Activated CD8-positive, alpha-beta T cell treated with anti-CD3 and anti-CD28 coated beads, Interleukin-2, amount 10 ng/mL, durations not matched to agents 7 days and 5 days (primary cell): ENCODE measurements at regions of chr1 and their contacts with region 1.

Region 1: GRCh38 chr1:110766025-110766647 is 91.4 kb upstream of the KCNA3 start:
- DNase-seq: peak; percentile 80
- ATAC-seq: peak; percentile 82
- H3K4me3 Mint-ChIP-seq: peak overlapping the region; percentile 29
- H3K27ac Mint-ChIP-seq: no peak overlapping the region
- H3K4me1 Mint-ChIP-seq: peaks cover 9% of the 10 kb centered on the region
- H3K27me3 Mint-ChIP-seq: peaks cover 36% of the 10 kb centered on the region

Region 2: GRCh38 chr1:110554871-110555801 is 211.0 kb before region 1 on chr1:
- CTCF ChIA-PET with region 1: interaction called, 23 read pairs
- POLR2A ChIA-PET with region 1: no interaction called
- DNase-seq: peak; percentile 62
- ATAC-seq: peak; percentile 84
- H3K4me3 Mint-ChIP-seq: no peak overlapping the region
- H3K27ac Mint-ChIP-seq: no peak overlapping the region
- H3K4me1 Mint-ChIP-seq: peaks cover 2% of the 10 kb centered on the region
- H3K27me3 Mint-ChIP-seq: peaks cover 51% of the 10 kb centered on the region

Region 3: GRCh38 chr1:110639724-110640386 is 126.3 kb before region 1 on chr1:
- CTCF ChIA-PET with region 1: interaction called, 23 read pairs
- POLR2A ChIA-PET with region 1: interaction called, 3 read pairs
- DNase-seq: no peak
- ATAC-seq: no peak
- H3K4me3 Mint-ChIP-seq: no peak overlapping the region
- H3K27ac Mint-ChIP-seq: no peak overlapping the region
- H3K4me1 Mint-ChIP-seq: peaks cover 66% of the 10 kb centered on the region
- H3K27me3 Mint-ChIP-seq: no peaks in the 10 kb centered on the region

Region 4: GRCh38 chr1:110674337-110675059 is 91.6 kb before region 1 on chr1 and contains the start of gene KCNA3:
- CTCF ChIA-PET with region 1: interaction called, 56 read pairs
- POLR2A ChIA-PET with region 1: interaction called, 13 read pairs
- DNase-seq: peak; percentile 77
- ATAC-seq: peak; percentile 43
- H3K4me3 Mint-ChIP-seq: peak within 1 kb of the TSS; percentile 95
- H3K27ac Mint-ChIP-seq: peak within 1 kb of the TSS; percentile 91
- H3K4me1 Mint-ChIP-seq: peaks cover 33% of the 10 kb centered on the region
- H3K27me3 Mint-ChIP-seq: no peaks in the 10 kb centered on the region
- total RNA-seq, gene KCNA3: 49.0 to 49.3 TPM

Region 5: GRCh38 chr1:110780600-110781484 is 14.7 kb after region 1 on chr1:
- CTCF ChIA-PET with region 1: interaction called, 113 read pairs
- POLR2A ChIA-PET with region 1: interaction called, 3 read pairs
- DNase-seq: peak; percentile 86
- ATAC-seq: peak; percentile 71
- H3K4me3 Mint-ChIP-seq: no peak overlapping the region
- H3K27ac Mint-ChIP-seq: no peak overlapping the region
- H3K4me1 Mint-ChIP-seq: peaks cover 42% of the 10 kb centered on the region
- H3K27me3 Mint-ChIP-seq: peaks cover 7% of the 10 kb centered on the region

Region 6: GRCh38 chr1:111030590-111030989 is 264.5 kb after region 1 on chr1:
- CTCF ChIA-PET with region 1: interaction called, 10 read pairs
- POLR2A ChIA-PET with region 1: no interaction called
- DNase-seq: peak; percentile 76
- ATAC-seq: peak; percentile 70
- H3K4me3 Mint-ChIP-seq: no peak overlapping the region
- H3K27ac Mint-ChIP-seq: no peak overlapping the region
- H3K4me1 Mint-ChIP-seq: no peaks in the 10 kb centered on the region
- H3K27me3 Mint-ChIP-seq: peaks cover 24% of the 10 kb centered on the region